ENCODE measurements at regions of chr5 and their contacts with region 1.

Region 1: GRCh38 chr5:37412515-37413277 is 33.6 kb downstream of the WDR70 start:
- DNase-seq: no peak
- ATAC-seq: peak; percentile 54

Region 2: DNA sequence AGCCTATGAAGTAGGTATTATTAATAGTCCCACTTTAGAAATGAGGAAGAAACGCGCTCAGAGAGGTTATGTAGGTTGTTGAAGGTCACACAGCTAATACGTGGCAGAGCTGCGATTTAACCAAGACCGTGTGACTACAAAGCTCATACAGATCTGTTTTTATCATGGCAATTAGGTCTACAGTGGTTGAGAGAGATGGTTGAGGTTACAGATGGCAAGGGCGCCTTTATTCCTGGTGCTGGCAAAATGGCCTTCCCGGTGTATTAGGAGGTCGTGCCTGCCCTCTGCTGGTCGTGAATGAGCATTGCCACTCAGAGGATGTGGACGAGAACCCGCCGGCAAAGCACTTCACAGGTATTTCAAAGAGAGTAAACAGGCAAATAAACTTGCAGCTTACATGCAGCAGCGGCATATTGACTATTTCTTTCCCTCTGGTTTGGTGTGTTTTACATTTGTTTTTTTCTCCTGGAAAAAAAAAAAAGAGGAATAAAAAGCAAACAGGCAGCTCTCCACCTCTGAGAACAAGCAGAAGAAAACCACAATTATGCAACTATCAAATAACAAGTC is 780.4 kb after region 1 on chr5:
- intact Hi-C with region 1: loop called (anchors 5 kb)
- DNase-seq: peak; percentile 78
- ATAC-seq: peak; percentile 73